OCI-LY7 (cell line): ENCODE measurements at regions of chr6 and their contacts with region 1.

Region 1: GRCh38 chr6:108250240-108250866 is 10.5 kb downstream of the SNX3 start:
- DNase-seq: peak; percentile 64
- H3K4me3 ChIP-seq: no peak overlapping the region
- H3K27ac ChIP-seq: no peak overlapping the region
- H3K4me1 ChIP-seq: peaks cover 13% of the 10 kb centered on the region
- CTCF ChIP-seq: peak; percentile 81

Region 2: GRCh38 chr6:107124934-107125348 is 1125.4 kb before region 1 on chr6:
- CTCF ChIA-PET with region 1: no interaction called
- POLR2A ChIA-PET with region 1: no interaction called
- intact Hi-C with region 1: no loop called
- DNase-seq: peak; percentile 73
- H3K4me3 ChIP-seq: peak overlapping the region; percentile 23
- H3K27ac ChIP-seq: peak overlapping the region; percentile 40
- H3K4me1 ChIP-seq: peaks cover 54% of the 10 kb centered on the region
- CTCF ChIP-seq: peak; percentile 39; the same call in 1 of the 2 replicates

Region 3: DNA sequence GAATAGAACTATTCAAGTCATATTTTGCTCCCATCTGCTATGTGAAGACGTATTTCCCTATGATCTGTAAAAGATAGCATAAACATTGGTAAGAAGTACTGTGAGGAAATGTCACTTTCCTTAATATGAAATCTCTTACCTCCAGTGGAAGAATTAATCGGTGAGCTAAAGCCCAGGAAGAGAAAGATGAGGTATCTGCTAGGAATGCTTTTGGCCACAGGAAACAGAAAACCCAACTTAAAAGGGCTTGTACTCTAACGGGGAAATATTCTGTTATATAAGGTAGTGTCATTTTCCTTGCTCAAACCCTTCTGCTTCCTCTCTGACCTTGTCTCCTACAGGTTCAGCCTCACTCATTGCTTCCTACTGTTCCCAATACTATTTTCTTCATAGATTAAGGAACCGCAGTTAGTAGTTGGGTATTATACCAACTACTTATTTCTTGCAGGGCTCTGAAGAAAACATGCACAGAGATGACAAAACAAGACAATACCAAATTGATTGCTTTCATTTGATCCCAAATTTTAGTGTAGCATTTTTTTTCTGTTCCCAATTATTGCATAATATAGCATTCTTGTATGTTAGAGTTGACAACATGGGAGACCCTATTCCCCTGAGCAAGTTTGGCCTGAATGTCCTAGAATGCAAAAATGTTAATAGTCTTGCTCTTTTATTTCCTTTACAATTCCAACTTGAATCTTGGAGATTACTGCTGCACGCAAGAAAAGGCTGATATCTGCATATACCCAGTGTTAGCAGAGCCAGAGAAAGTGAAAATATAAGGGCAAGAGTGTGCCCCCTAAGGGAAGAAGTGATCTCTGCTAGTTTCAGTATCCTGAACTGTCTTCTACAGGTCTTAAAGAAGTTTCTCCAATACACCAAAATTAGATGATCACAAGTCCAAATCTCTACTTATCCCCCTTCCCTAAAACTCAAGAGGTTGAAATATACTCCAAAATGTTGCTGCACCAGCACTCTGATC is 109.8 kb after region 1 on chr6:
- CTCF ChIA-PET with region 1: no interaction called
- POLR2A ChIA-PET with region 1: no interaction called
- intact Hi-C with region 1: loop called (anchors 5 kb)
- DNase-seq: peak; percentile 10
- H3K4me3 ChIP-seq: no peak overlapping the region
- H3K27ac ChIP-seq: no peak overlapping the region
- H3K4me1 ChIP-seq: no peaks in the 10 kb centered on the region
- CTCF ChIP-seq: peak; percentile 67

Region 4: GRCh38 chr6:108395297-108395696 is 144.9 kb after region 1 on chr6:
- CTCF ChIA-PET with region 1: no interaction called
- POLR2A ChIA-PET with region 1: no interaction called
- intact Hi-C with region 1: no loop called
- DNase-seq: no peak
- H3K4me3 ChIP-seq: no peak overlapping the region
- H3K27ac ChIP-seq: no peak overlapping the region
- H3K4me1 ChIP-seq: no peaks in the 10 kb centered on the region
- CTCF ChIP-seq: no peak

Region 5: GRCh38 chr6:108673602-108674001 is 423.2 kb after region 1 on chr6:
- CTCF ChIA-PET with region 1: no interaction called
- POLR2A ChIA-PET with region 1: no interaction called
- intact Hi-C with region 1: no loop called
- DNase-seq: no peak
- H3K4me3 ChIP-seq: peak overlapping the region; percentile 4
- H3K27ac ChIP-seq: peak overlapping the region; percentile 44
- H3K4me1 ChIP-seq: peaks cover 40% of the 10 kb centered on the region
- CTCF ChIP-seq: no peak